IMR-90 (cell line): ENCODE measurements at regions of chr4 and their contacts with region 1.

Region 1: DNA sequence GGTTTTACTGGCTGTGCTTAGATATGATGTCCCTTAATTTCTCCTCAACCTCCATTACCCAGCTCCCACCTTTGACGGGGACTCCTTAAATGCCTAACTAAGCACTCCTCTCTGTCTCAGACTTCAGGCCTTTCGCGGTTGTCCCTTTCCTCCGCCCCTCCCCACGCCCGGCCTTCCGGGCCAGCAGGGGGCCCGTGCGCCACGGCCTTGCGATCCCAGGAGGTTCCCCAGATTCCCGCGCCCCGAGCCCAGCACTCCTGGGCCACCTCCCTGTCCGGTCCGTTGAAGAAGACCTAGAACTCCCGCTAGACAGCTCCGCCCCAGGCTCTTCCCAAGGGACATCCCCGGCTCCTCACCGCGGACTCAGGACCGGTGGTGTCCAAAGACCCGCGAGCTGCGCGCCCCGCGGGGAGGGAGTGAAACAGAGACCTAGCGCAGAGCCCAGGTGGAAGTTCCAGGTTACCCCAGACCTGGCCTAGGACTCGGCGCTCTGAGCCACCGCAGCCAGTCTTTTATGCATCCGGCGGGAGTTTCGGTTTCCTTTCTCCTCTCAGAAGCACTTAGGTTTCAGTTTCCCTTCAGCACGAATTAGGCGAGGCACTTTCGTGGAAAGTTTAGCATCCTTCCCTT is at the start of gene DDX60:
- DNase-seq: peak; percentile 73
- ATAC-seq: peak; percentile 93
- H3K4me3 ChIP-seq: peak within 1 kb of the TSS; percentile 74
- H3K27ac ChIP-seq: peak within 1 kb of the TSS; percentile 85
- H3K4me1 ChIP-seq: no peaks in the 10 kb centered on the region
- H3K27me3 ChIP-seq: no peaks in the 10 kb centered on the region
- CTCF ChIP-seq: peak; percentile 40
- POLR2A ChIP-seq: peak; percentile 28; the same call in 1 of the 2 replicates
- RAD21 ChIP-seq: peak; percentile 41
- total RNA-seq, gene DDX60: 6.6 and 11.4 TPM in 2 replicates

Region 2: GRCh38 chr4:168480931-168481611 is 162.7 kb after region 1 on chr4:
- CTCF ChIA-PET with region 1: no interaction called
- POLR2A ChIA-PET with region 1: no interaction called
- dilution Hi-C with region 1: no loop called
- in situ Hi-C with region 1: no loop called
- intact Hi-C with region 1: loop called (anchors 2 kb)
- DNase-seq: peak; percentile 85
- ATAC-seq: peak; percentile 21; the same call in 1 of the 2 replicates
- H3K4me3 ChIP-seq: peak overlapping the region; percentile 62
- H3K27ac ChIP-seq: peak overlapping the region; percentile 80
- H3K4me1 ChIP-seq: peaks cover 10% of the 10 kb centered on the region
- H3K27me3 ChIP-seq: no peaks in the 10 kb centered on the region
- CTCF ChIP-seq: no peak
- POLR2A ChIP-seq: no peak
- RAD21 ChIP-seq: no peak

Region 3: DNA sequence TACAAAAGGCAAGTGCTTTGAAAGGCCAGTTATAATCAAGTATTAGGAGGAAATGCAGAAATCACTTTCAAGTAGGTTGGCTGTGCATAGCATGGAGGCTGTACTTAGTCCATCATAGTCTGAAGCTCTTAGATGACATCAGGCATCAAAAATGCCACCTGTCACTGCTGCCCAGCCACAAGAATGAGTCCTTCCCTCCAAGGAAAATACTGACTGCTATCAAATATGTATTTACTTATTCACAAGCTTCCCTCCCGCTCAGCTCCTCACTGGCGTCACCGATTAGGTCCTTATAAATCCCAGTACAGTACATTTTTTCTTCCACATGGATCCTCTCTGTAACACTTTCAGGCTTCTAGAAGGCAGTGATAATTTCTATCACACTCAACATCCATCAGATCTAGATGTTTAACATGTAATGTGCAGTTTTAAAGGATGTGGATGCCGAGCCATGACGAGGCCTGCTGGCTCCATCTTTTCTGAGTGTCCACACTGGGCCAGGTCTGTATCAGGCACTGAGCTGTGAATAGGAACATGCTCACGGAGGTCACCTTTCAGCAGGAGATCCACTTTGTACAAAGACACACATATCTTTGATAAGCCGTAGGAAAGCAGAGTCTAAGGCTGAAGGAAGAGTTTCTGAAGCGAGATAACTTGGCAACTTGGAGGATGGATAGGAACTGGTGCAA is 300.3 kb after region 1 on chr4:
- CTCF ChIA-PET with region 1: no interaction called
- POLR2A ChIA-PET with region 1: no interaction called
- dilution Hi-C with region 1: no loop called
- in situ Hi-C with region 1: no loop called
- intact Hi-C with region 1: loop called (anchors 5 kb)
- DNase-seq: peak; percentile 84
- ATAC-seq: peak; percentile 21
- H3K4me3 ChIP-seq: no peak overlapping the region
- H3K27ac ChIP-seq: peak overlapping the region; percentile 13; the same call in 1 of the 2 replicates
- H3K4me1 ChIP-seq: peaks cover 33% of the 10 kb centered on the region
- H3K27me3 ChIP-seq: no peaks in the 10 kb centered on the region
- CTCF ChIP-seq: no peak
- POLR2A ChIP-seq: no peak
- RAD21 ChIP-seq: no peak

Region 4: DNA sequence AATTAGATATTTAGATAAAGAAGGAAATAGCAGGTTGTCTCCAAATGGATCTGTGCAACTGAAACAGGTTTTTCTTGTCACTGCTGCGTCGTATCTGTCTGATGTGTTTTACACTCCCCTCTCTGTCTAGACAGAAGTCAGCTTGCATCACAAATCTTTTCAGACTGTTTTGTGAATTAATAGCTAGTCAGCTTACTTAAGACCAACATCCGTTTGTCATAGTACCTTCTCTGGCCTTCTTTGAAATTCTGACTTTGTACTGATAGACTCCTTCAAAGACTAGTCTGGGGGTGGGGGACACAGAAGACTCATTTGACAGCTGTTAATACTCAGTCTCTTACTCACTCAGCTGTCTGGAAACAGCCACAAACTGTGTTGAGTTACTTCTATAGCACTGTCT is 376.3 kb after region 1 on chr4:
- CTCF ChIA-PET with region 1: no interaction called
- POLR2A ChIA-PET with region 1: no interaction called
- dilution Hi-C with region 1: no loop called
- in situ Hi-C with region 1: no loop called
- intact Hi-C with region 1: loop called (anchors 10 kb)
- DNase-seq: peak; percentile 72
- ATAC-seq: peak; percentile 79
- H3K4me3 ChIP-seq: no peak overlapping the region
- H3K27ac ChIP-seq: no peak overlapping the region
- H3K4me1 ChIP-seq: peaks cover 14% of the 10 kb centered on the region
- H3K27me3 ChIP-seq: no peaks in the 10 kb centered on the region
- CTCF ChIP-seq: no peak
- POLR2A ChIP-seq: no peak
- RAD21 ChIP-seq: no peak

Region 5: DNA sequence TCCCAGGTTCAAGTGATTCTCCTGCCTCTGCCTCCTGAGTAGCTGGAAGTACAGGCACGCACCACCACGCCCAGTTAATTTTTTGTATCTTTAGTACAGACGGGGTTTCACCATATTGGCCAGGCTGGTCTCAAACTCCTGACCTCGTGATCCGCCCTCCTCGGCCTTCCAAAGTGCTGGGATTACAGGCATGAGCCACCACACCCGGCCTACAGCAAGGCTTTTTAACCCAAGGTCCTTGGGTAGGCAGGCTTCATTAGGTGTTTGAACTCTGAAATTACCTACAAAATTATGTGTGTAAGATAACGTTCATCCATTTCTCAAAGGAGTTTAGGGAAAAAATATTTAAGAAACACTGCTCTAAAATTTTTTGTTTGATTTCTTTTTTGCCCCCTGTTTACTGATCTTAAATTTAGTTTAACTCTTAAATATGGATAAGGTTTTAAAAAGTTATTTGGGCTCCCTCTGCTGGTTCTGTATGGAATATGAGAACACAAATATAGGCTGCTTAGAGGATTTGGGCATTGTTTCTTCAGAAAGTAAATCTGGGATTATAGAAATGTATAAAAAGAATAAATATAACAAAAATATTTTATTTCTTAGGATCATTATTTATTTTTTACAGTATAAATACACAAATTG is 598.9 kb after region 1 on chr4:
- CTCF ChIA-PET with region 1: no interaction called
- POLR2A ChIA-PET with region 1: no interaction called
- dilution Hi-C with region 1: no loop called
- in situ Hi-C with region 1: no loop called
- intact Hi-C with region 1: loop called (anchors 10 kb)
- DNase-seq: peak; percentile 54
- ATAC-seq: peak; percentile 46
- H3K4me3 ChIP-seq: no peak overlapping the region
- H3K27ac ChIP-seq: no peak overlapping the region
- H3K4me1 ChIP-seq: peaks cover 2% of the 10 kb centered on the region; the same call in 1 of the 2 replicates
- H3K27me3 ChIP-seq: no peaks in the 10 kb centered on the region
- CTCF ChIP-seq: peak; percentile 52
- POLR2A ChIP-seq: no peak
- RAD21 ChIP-seq: peak; percentile 50